ENCODE measurements at regions of chr15 and their contacts with region 1.

Region 1: DNA sequence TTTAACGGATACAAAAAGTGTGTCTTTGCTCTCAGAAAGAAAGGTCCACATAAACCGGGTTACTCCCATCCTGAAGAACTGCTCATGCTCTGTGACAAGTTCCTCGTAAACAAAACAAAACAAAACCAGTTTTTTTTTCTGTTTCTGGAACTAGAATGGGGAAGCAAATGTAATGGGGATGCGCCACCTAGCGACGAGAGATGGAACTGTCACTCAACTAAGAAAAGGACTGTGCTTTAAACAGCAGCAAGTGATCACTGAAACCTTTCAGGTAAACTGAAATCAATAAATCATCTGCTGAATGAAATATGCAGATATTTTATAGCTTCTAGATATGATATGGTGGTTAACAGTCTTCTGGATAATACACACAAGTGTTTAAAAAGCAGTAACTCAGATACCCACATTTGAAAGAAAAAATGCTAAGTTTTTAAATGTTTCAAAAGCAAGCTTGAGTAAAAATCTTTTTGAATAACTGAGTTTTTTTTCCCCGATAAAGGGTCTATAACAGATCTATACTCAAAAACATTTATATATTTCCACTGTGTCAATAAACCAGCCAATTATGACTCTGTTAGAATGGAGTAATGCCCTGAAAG is 10.9 kb downstream of the TM2D3 start:
- DNase-seq: peak; percentile 77
- H3K4me3 ChIP-seq: no peak overlapping the region
- H3K27ac ChIP-seq: peak overlapping the region in 3 of 4 donors; percentile 27 to 40 (median 29)
- H3K4me1 ChIP-seq: peaks cover 0 to 11% (median 5%) of the 10 kb centered on the region in 4 donors
- H3K27me3 ChIP-seq: no peaks in the 10 kb centered on the region
- CTCF ChIP-seq: peak; percentile 87 to 93 (median 88)
- EP300 ChIP-seq: no peak
- POLR2A ChIP-seq: no peak

Region 2: DNA sequence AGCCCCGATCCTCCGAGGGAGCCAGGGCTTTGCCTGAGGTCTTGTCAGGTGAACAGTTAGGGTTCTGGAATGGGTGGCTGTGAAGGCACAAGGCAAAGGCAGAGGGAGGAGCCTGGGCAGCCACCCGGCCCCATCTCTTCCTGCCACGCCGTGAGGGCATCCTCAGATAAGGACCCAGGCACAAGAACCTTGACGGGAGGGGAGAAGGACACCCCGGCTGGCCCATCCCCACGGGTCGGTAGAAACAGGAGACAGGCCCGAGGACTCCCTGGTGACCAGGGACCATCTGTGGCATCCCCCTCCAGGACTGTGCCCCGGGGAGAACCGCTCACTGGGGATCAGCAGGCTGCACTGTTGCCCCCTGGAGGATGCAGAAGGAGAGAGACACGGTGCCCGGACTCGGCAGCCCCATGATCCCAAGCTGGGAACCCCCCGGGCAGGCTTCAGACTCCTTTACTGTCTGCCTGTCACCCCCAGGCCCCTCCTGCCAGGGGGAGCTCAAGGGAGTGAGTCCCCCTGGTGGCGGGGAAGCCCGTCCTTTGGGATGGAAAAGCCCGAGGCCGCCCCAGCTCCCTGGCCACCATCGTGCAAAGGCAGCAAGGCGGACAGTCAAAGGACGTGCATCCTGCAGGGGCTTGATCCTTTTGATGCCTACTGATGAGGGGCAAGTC is 139.4 kb before region 1 on chr15:
- intact Hi-C with region 1: loop called (anchors 10 kb)
- DNase-seq: no peak
- H3K4me3 ChIP-seq: no peak overlapping the region
- H3K27ac ChIP-seq: peak overlapping the region in 2 of 4 donors; percentile 37 to 41
- H3K4me1 ChIP-seq: peaks cover 0 to 32% (median 22%) of the 10 kb centered on the region in 4 donors
- H3K27me3 ChIP-seq: peaks cover 0 to 11% (median 0%) of the 10 kb centered on the region in 3 donors
- CTCF ChIP-seq: peak; percentile 19 to 33 (median 32)
- EP300 ChIP-seq: no peak
- POLR2A ChIP-seq: no peak

Region 3: GRCh38 chr15:101540480-101541239 is 100.6 kb before region 1 on chr15:
- intact Hi-C with region 1: loop called (anchors 5 kb)
- DNase-seq: peak; percentile 63
- H3K4me3 ChIP-seq: no peak overlapping the region
- H3K27ac ChIP-seq: no peak overlapping the region
- H3K4me1 ChIP-seq: no peaks in the 10 kb centered on the region
- H3K27me3 ChIP-seq: no peaks in the 10 kb centered on the region
- CTCF ChIP-seq: peak in 1 of 4 experiments; percentile 19
- EP300 ChIP-seq: no peak
- POLR2A ChIP-seq: no peak

Measured in sigmoid colon (tissue), 7 donors.